WTC11 (cell line): ENCODE measurements at regions of chr13 and their contacts with region 1.

Region 1: DNA sequence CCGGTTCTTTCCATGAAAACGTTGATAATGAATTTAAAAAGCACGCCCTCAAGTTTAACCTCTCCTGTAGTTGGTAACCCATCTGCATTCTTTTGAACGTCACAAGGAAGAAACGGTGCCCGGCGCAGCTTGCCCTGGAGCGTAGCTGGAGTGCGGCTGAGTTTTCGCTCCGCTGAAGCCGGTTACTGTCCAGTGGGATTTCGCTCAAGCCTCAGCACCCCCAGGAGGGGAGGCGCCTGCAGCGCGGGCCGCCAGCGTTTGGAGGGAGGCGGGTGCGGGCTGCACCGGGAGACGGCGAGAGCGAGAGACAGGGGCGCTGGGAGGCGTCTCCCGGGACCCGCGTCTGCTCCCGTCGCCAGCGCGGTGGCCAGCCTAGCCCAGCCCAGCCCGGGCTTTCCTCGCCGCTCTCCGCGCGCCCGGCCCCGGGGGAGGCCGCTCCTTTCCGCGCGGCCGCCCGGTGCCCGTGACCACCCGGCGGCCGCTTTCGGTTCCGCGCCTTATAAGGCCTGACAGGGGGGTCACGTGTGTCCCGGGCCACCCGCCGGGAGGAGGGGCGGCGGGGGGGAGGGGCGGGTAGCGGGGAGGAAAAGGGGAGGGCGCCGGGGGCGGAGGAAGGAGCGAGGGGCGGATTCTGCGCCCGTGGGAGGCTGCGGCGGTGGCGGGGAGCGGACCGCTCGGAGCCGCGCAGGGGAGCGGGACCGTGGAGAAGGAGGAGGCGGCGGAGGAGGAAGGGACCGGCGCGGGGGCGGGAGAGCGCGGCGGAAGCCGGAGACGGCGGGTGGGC is 8.3 kb upstream of the DGKH start:
- DNase-seq: peak; percentile 73
- ATAC-seq: peak; percentile 49
- H3K4me3 Mint-ChIP-seq: peak overlapping the region; percentile 85
- H3K27ac Mint-ChIP-seq: peak overlapping the region; percentile 26; the same call in 1 of the 2 replicates
- H3K4me1 Mint-ChIP-seq: peaks cover 22% of the 10 kb centered on the region
- H3K27me3 Mint-ChIP-seq: peaks cover 73% of the 10 kb centered on the region
- CTCF ChIP-seq: no peak

Region 2: GRCh38 chr13:41668130-41668757 is 371.9 kb before region 1 on chr13:
- CTCF ChIA-PET with region 1: interaction called, 13 read pairs
- POLR2A ChIA-PET with region 1: no interaction called
- DNase-seq: no peak
- ATAC-seq: peak; percentile 99
- H3K4me3 Mint-ChIP-seq: no peak overlapping the region
- H3K27ac Mint-ChIP-seq: no peak overlapping the region
- H3K4me1 Mint-ChIP-seq: peaks cover 3% of the 10 kb centered on the region; the same call in 1 of the 2 replicates
- H3K27me3 Mint-ChIP-seq: no peaks in the 10 kb centered on the region
- CTCF ChIP-seq: peak; percentile 32; the same call in 1 of the 2 replicates

Region 3: DNA sequence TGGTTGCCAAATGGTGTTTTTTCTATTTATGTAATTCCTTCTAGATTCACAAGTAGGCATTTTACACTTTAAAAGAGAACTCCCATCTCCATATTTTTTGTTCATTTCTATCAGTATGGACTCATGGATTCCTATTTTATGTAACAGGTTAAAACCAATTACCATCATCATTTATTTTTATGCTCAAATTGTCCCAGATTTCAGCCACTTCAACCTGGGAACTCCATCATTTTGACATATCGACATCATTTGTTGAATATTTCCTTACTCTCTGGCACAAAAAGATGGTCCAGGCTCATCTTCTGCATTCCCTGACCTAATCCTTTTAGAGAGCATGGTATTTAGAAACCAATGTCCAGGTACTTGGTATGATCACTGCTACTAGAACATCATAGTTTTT is 159.2 kb before region 1 on chr13:
- CTCF ChIA-PET with region 1: no interaction called
- POLR2A ChIA-PET with region 1: no interaction called
- DNase-seq: no peak
- ATAC-seq: no peak
- H3K4me3 Mint-ChIP-seq: no peak overlapping the region
- H3K27ac Mint-ChIP-seq: no peak overlapping the region
- H3K4me1 Mint-ChIP-seq: no peaks in the 10 kb centered on the region
- H3K27me3 Mint-ChIP-seq: no peaks in the 10 kb centered on the region
- CTCF ChIP-seq: no peak

Region 4: GRCh38 chr13:42247883-42248282 is 207.7 kb after region 1 on chr13:
- CTCF ChIA-PET with region 1: no interaction called
- POLR2A ChIA-PET with region 1: no interaction called
- DNase-seq: no peak
- ATAC-seq: no peak
- H3K4me3 Mint-ChIP-seq: no peak overlapping the region
- H3K27ac Mint-ChIP-seq: no peak overlapping the region
- H3K4me1 Mint-ChIP-seq: no peaks in the 10 kb centered on the region
- H3K27me3 Mint-ChIP-seq: no peaks in the 10 kb centered on the region
- CTCF ChIP-seq: no peak